CD4-positive, alpha-beta memory T cell (primary cell): ENCODE measurements at regions of chr14 and their contacts with region 1.

Region 1: DNA sequence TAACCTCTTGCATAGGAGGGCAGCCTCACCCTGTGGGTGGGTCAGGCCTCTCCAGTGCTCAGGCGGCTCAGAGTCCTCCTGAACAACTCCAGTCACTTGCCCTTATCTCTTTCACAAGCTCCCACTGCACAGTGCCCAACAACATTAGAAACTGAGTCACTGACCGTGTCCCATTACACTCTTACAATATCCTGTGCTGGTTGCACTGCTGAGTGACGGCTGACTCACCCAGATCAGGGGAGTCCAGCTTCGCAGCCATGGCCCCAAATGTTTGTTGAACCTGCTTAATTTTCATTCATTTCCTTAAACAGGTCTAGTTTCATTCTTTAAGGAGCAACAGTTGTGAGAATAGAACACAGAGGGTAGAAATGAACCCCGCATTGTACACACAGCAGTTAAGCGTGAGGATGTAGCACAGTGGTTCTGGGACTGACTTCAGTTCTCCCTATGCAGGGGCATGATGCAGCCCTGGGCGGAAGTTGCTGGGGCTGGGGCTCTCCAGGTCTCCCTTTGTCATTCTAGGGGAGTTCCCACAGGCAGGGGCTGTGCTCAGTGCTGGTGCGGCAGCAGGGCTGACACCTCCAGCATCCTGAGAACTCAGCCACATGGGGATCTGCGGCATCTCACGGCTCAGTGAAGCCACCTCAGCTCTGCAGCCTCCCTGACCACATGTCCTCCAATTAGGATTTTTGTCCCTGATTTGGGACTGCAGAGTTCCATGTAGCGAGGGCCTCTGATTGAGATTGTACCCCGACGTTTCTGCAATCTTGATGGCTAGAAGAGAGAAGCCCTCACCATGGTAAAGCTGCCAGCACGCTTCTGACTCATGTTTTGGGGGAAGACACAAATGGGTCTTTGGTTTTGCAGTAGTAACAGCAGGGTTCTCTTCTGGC is 16.1 kb downstream of the GPR68 start:
- DNase-seq: peak; percentile 74 to 96 (median 77)
- H3K4me3 ChIP-seq: peak overlapping the region; percentile 2 to 28
- H3K4me3 Mint-ChIP-seq: peak overlapping the region; percentile 41 to 97 (median 86)
- H3K27ac ChIP-seq: peak overlapping the region; percentile 88
- H3K27ac Mint-ChIP-seq: peak overlapping the region; percentile 97 to 100 (median 99)
- H3K4me1 ChIP-seq: peaks cover 98% of the 10 kb centered on the region
- H3K4me1 Mint-ChIP-seq: peaks cover 78 to 100% (median 91%) of the 10 kb centered on the region in 4 donors
- H3K27me3 ChIP-seq: no peaks in the 10 kb centered on the region
- H3K27me3 Mint-ChIP-seq: no peaks in the 10 kb centered on the region

Region 2: DNA sequence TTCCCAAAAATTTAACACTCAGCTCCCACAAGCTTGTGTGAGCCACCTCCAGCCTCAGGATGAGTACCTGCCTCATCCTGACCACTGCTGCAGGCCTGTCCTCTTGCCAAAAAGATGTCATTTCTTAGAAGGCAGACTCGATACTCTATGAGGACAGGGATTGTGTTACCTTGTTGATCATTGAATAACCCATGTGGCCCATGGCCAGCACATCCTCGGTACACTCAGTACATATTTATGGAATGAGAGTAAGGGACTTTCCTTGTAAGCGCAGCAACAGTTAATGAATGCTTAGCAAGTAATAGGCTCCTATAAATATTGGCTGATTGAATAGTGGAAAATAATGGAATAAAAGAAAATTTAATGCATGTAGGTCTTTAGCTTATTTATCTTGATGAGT is 129.8 kb before region 1 on chr14:
- CTCF ChIA-PET with region 1: no interaction called
- POLR2A ChIA-PET with region 1: no interaction called
- intact Hi-C with region 1: no loop called
- DNase-seq: no peak
- H3K4me3 ChIP-seq: no peak overlapping the region
- H3K4me3 Mint-ChIP-seq: no peak overlapping the region
- H3K27ac ChIP-seq: no peak overlapping the region
- H3K27ac Mint-ChIP-seq: peak overlapping the region in 1 of 7 donors; percentile 74
- H3K4me1 ChIP-seq: no peaks in the 10 kb centered on the region
- H3K4me1 Mint-ChIP-seq: peaks cover 0 to 5% (median 4%) of the 10 kb centered on the region in 4 donors
- H3K27me3 ChIP-seq: peaks cover 3% of the 10 kb centered on the region
- H3K27me3 Mint-ChIP-seq: peaks cover 0 to 4% of the 10 kb centered on the region in 2 donors

Region 3: DNA sequence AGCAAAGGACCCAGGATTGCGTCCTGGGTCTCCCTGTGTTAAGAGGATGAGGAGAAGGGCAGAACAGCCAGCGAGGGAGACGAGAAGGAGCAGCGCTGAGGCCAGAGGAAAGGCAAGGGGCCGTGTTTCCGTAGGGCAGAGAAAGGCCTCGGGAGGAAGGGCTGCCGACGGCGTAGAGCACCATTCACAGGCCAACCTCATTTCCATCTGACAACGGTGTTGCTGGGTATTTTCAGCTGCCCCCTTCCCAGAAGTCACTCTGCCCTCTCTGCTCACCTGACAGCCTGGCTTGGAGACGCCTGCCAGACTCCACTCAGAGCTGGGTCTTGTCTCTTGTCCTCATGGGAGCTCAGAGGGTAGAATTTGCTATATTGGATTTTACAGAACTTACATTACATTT is 35.3 kb before region 1 on chr14:
- CTCF ChIA-PET with region 1: no interaction called
- POLR2A ChIA-PET with region 1: interaction called, 26 read pairs
- intact Hi-C with region 1: loop called (anchors 5 kb)
- DNase-seq: no peak
- H3K4me3 ChIP-seq: no peak overlapping the region
- H3K4me3 Mint-ChIP-seq: peak overlapping the region in 1 of 8 donors; percentile 55
- H3K27ac ChIP-seq: no peak overlapping the region
- H3K27ac Mint-ChIP-seq: peak overlapping the region in 4 of 7 donors; percentile 3 to 44 (median 40)
- H3K4me1 ChIP-seq: peaks cover 14% of the 10 kb centered on the region
- H3K4me1 Mint-ChIP-seq: peaks cover 18 to 31% (median 25%) of the 10 kb centered on the region in 4 donors
- H3K27me3 ChIP-seq: no peaks in the 10 kb centered on the region
- H3K27me3 Mint-ChIP-seq: no peaks in the 10 kb centered on the region

Region 4: GRCh38 chr14:91264151-91265150 is 36.1 kb after region 1 on chr14:
- CTCF ChIA-PET with region 1: interaction called, 3 read pairs
- POLR2A ChIA-PET with region 1: interaction called, 45 read pairs
- intact Hi-C with region 1: no loop called
- DNase-seq: peak in 2 of 5 donors; percentile 39 to 41
- H3K4me3 ChIP-seq: peak overlapping the region in 1 of 2 donors; percentile 32
- H3K4me3 Mint-ChIP-seq: peak overlapping the region; percentile 69 to 85 (median 79)
- H3K27ac ChIP-seq: peak overlapping the region; percentile 31
- H3K27ac Mint-ChIP-seq: peak overlapping the region in 6 of 7 donors; percentile 60 to 97 (median 84)
- H3K4me1 ChIP-seq: peaks cover 45% of the 10 kb centered on the region
- H3K4me1 Mint-ChIP-seq: peaks cover 39 to 69% (median 46%) of the 10 kb centered on the region in 4 donors
- H3K27me3 ChIP-seq: no peaks in the 10 kb centered on the region
- H3K27me3 Mint-ChIP-seq: no peaks in the 10 kb centered on the region

Region 5: DNA sequence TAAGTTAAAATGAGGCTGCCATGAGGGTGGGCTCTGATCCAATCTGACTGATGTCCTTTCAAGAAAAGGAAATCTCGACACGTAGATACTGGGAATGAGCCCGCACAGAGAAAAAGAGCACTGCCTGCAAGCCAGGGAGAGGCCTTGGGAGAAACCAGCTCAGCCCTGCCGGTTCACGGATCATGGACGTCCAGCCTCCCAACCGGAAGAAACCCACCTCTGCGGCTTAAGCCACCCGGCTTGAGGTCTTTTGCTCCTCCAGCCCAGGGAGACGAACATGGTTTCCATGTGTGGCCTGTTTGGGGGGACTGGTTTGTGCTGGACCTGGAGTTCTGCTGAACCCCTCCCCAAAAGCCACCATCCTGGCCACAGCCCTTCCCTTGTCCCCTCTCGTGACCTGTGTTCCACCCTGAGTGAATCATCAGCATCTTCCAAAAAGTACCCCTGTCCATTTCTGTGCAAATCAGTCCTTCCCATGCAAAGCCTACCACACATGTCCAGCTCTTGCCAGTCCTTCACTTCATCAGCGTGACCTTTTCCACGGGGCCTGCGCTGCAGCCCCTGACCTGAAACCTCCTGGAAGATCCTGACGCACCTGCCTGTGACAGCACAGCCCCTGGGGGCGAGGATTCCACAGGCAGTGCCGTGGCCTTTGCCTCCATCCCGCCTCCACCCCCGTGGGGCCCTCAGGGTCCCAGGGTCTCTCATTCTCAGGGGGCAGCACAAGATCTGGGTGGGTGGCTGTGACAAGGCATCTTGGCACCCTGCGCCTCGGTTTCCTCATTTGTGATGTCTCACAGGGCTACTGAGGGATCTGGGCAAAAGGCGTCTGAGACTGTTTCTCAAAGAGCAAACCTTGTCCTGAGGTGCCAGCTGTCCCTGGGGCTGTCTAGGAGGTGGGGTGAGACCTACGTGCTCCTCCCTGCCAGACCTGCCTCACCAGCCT is 67.8 kb after region 1 on chr14:
- CTCF ChIA-PET with region 1: no interaction called
- POLR2A ChIA-PET with region 1: no interaction called
- intact Hi-C with region 1: no loop called
- DNase-seq: peak in 1 of 5 donors; percentile 11
- H3K4me3 ChIP-seq: no peak overlapping the region
- H3K4me3 Mint-ChIP-seq: no peak overlapping the region
- H3K27ac ChIP-seq: no peak overlapping the region
- H3K27ac Mint-ChIP-seq: peak overlapping the region in 5 of 7 donors; percentile 30 to 87 (median 60)
- H3K4me1 ChIP-seq: no peaks in the 10 kb centered on the region
- H3K4me1 Mint-ChIP-seq: peaks cover 0 to 10% (median 2%) of the 10 kb centered on the region in 4 donors
- H3K27me3 ChIP-seq: no peaks in the 10 kb centered on the region
- H3K27me3 Mint-ChIP-seq: no peaks in the 10 kb centered on the region

Region 6: DNA sequence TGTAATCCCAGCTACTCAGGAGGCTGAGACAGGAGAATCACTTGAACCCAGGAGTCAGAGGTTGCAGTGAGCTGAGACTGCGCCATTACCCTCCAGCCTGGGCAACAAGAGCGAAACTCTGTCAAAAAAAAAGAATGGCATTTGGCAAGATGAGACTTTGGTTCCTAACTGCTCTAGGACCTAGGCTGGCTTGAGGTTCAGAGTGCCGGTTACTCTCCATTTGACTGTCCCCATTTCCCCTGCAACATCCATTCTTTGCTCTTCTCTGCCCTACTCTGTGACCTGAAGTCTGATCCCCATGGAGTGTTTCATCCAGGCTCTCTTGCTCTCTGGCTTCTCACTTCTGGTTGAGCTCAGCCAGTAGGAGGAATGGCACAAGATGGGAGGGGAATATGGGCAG is 308.0 kb after region 1 on chr14:
- CTCF ChIA-PET with region 1: no interaction called
- POLR2A ChIA-PET with region 1: no interaction called
- intact Hi-C with region 1: no loop called
- DNase-seq: no peak
- H3K4me3 ChIP-seq: no peak overlapping the region
- H3K4me3 Mint-ChIP-seq: no peak overlapping the region
- H3K27ac ChIP-seq: no peak overlapping the region
- H3K27ac Mint-ChIP-seq: no peak overlapping the region
- H3K4me1 ChIP-seq: no peaks in the 10 kb centered on the region
- H3K4me1 Mint-ChIP-seq: no peaks in the 10 kb centered on the region
- H3K27me3 ChIP-seq: no peaks in the 10 kb centered on the region
- H3K27me3 Mint-ChIP-seq: peaks cover 5 to 12% of the 10 kb centered on the region in 2 donors